Left cardiac atrium (tissue), 4 donors: ENCODE measurements at regions of chr6 and their contacts with region 1.

Region 1: DNA sequence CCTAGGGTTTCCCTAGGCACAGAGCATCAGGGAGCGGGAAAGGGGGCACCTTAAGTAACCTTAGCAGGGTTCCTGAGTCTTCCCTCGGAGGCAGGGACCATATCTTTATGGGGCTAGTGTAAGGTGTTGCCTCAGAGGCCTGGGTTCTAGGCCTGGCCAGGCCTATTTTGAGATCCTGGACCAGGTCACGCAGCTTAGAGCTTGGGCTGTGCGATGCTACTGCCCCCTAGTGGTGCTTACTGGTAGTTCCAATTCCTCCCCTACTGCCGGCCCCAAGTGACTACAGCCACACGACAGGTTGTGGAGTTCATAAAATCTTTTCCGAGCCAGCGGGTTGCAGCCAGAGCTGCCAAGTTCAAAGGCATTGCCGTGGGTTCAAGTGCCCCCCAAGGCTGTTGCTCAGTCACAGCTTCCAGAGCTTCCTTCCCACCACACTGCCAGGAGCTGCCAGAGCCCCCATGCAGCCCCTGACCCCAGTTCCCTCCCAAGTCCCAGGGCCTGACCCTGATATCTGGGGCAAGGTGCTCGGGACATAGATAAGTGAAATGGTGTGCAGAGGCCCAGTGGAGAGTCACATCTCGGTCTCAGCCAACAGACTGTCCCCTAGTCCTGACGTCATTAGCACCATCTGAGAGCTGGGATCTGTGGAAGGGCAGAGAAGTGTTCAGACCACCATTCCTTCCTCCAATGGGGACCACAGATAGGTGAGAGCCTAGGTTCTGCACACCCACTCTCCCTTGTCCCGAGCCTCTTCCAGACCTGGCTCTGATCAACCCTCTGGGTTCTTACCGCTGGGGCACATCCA is 3.3 kb downstream of the LRRC73 start:
- DNase-seq: peak; percentile 76
- ATAC-seq: peak; percentile 35 to 42

Region 2: DNA sequence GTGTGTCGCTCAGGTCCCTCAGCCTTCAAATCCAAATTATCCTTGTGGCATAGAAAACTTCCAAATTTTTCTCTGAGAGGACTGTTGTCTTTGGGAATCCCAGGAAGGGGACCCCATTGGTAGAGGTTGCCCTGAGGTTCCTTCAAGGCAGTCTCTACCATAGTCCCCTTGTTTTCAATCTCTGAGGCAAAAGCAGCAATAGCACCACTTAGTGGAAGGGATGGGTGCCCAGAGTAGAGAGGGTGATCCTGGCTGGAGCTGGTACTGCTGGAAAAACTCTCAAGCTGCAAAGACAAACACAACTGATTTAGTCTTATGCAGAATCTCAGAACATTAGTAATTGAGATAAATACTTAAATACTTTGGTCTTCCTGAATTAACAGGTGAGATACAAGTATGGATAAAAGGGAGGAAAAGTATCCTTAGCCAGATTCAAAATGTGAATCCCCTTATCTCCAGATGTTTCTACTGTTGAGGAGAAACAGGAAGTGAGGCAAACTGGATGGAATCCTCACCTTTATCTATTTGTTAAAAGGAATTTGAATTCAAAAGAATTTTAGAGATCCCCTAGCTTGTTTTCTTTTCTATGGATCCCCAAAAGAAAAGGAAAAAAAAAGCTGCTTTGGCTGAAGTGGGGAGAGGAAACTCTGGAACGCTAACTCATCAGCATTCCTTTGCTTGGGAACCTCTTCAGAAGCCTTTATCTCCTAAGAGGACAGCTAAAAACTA is 150.8 kb before region 1 on chr6:
- intact Hi-C with region 1: no loop called
- DNase-seq: no peak
- ATAC-seq: peak; percentile 44 to 58

Region 3: DNA sequence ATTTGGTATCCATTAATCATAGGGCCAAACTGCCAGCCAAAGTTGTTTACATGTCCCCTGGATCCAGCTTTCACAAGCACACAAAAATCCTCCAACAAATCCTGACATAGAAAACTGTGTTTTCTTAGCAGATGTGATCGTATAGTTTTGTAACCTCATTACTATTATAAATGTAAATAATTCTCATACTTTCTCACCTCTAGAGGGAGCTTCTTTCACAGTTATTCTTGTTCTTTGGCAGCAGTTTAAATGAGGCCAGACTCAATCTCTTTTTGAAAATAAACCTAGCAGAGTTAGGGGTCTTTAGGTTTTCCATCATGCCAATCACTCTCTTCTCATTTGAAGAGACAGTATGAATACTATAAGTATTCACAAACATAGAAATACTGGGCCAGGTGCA is 120.4 kb before region 1 on chr6:
- intact Hi-C with region 1: loop called (anchors 5 kb)
- DNase-seq: no peak
- ATAC-seq: no peak

Region 4: DNA sequence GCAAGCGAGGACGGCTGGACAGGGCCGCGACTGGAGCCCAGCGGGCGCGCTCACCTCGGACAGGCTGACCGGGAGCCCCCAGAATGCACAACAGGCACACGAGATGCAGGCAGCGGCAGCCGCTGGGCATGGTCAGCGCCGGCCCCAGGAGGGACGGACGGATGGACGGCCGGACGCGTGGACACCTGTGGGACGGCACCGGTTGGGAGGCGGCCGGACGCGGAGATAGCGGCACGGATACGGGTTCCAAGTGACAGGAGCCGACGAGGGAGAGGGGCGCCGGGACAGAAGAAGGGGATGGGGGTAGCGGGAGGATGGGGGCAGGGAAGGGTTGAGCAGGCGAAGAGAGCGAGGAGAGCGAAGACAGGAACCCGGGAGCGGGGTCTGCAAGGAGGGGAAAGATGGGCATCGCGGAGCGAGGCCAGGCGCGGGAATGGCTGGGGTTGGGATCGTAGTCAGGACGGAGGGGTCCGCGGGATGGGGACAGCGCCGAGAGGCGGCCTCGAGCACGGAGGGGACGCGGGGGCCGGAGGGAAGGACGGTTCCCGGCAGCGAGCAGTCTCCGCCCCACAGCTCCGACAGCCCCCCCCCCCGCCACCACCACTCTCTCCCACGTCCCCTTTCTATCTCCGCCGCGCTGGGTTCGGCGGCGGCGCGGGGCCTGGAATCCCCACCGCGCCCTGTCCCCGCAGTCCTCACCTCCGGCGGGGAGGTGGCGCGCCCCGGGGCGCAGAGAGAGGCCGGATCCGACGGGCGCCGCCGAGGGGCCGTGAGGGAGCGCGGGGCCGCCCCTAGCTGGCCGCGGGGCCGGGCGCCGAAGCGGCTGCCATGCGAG is 52.0 kb before region 1 on chr6:
- intact Hi-C with region 1: loop called (anchors 2 to 5 kb)
- DNase-seq: peak; percentile 89
- ATAC-seq: peak; percentile 90 to 91